ENCODE measurements at regions of chr9 and their contacts with region 1.

Region 1: GRCh38 chr9:127664667-127665507 is 41.9 kb upstream of the CFAP157 start:
- DNase-seq: peak in 1 of 4 donors; percentile 8
- ATAC-seq: no peak
- H3K4me3 ChIP-seq: no peak overlapping the region
- H3K27ac ChIP-seq: peak overlapping the region in 1 of 4 donors; percentile 0
- H3K4me1 ChIP-seq: no peaks in the 10 kb centered on the region
- H3K27me3 ChIP-seq: no peaks in the 10 kb centered on the region
- CTCF ChIP-seq: no peak
- POLR2A ChIP-seq: no peak

Region 2: DNA sequence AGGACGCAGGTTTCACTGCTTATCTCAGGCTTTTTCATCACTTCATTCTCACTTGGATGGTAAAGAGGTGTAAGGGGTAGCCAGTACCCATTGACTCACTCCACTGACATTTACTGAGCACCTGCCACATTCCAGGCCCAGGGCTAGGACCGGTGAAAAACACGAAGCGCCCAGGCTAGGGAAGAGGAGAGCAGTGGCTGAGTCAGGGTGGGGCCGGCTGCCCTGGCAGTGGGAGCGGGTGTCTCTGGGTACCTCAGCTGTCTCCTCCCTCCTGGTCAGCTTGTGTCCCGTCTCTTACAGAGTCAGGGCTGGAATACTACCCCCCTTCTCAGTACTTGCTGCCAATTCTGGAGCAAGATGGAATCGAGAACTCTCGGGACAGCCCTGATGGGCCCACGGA is 191.4 kb before region 1 on chr9:
- intact Hi-C with region 1: loop called (anchors 10 kb)
- DNase-seq: no peak
- ATAC-seq: no peak
- H3K4me3 ChIP-seq: no peak overlapping the region
- H3K27ac ChIP-seq: no peak overlapping the region
- H3K4me1 ChIP-seq: no peaks in the 10 kb centered on the region
- H3K27me3 ChIP-seq: no peaks in the 10 kb centered on the region
- CTCF ChIP-seq: no peak
- POLR2A ChIP-seq: no peak

Measured in body of pancreas (tissue), 4 donors.